T-cell (primary cell): ENCODE measurements at regions of chr1 and their contacts with region 1.

Region 1: DNA sequence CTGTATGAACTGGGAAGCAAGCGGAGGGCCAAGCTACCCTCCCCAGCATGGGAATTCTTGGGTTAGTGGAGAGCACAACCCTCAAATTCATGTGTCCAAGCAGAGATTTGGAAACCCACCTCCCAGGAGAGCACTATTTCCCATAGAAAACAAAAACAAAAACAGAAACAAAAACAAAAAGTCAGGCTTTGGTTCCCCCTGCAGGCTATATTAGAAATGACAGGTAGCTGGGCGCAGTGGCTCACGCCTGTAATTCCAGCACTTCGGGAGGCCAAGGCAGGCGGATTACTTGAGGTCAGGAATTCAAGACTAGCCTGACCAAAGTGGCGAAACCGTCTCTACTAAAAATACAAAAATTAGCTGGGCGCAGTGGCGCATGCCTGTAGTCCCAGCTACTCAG is 10.8 kb downstream of the MINDY1 start:
- DNase-seq: peak in 8 of 35 experiments; percentile 16 to 66 (median 22)
- ATAC-seq: peak in 3 of 4 experiments; percentile 37 to 55 (median 48)
- H3K4me3 ChIP-seq: no peak overlapping the region
- H3K4me3 Mint-ChIP-seq: no peak overlapping the region
- H3K27ac ChIP-seq: peak overlapping the region; percentile 9
- H3K27ac Mint-ChIP-seq: peak overlapping the region; percentile 76 to 79
- H3K4me1 ChIP-seq: peaks cover 0 to 11% of the 10 kb centered on the region in 2 experiments
- H3K4me1 Mint-ChIP-seq: peaks cover 7 to 15% (median 13%) of the 10 kb centered on the region in 3 donors
- H3K27me3 ChIP-seq: peaks cover 0 to 2% of the 10 kb centered on the region in 2 experiments
- H3K27me3 Mint-ChIP-seq: no peaks in the 10 kb centered on the region

Region 2: GRCh38 chr1:150876119-150876454 is 119.8 kb before region 1 on chr1:
- CTCF ChIA-PET with region 1: no interaction called
- POLR2A ChIA-PET with region 1: no interaction called
- DNase-seq: peak in 1 of 35 experiments; percentile 49
- ATAC-seq: peak in 3 of 4 experiments; percentile 46 to 54 (median 49)
- H3K4me3 ChIP-seq: peak overlapping the region; percentile 63 to 78
- H3K4me3 Mint-ChIP-seq: peak overlapping the region; percentile 86 to 90 (median 89)
- H3K27ac ChIP-seq: peak overlapping the region; percentile 71
- H3K27ac Mint-ChIP-seq: peak overlapping the region; percentile 65 to 83
- H3K4me1 ChIP-seq: peaks cover 4 to 13% of the 10 kb centered on the region in 2 experiments
- H3K4me1 Mint-ChIP-seq: peaks cover 28 to 39% (median 35%) of the 10 kb centered on the region in 3 donors
- H3K27me3 ChIP-seq: no peaks in the 10 kb centered on the region
- H3K27me3 Mint-ChIP-seq: no peaks in the 10 kb centered on the region

Region 3: DNA sequence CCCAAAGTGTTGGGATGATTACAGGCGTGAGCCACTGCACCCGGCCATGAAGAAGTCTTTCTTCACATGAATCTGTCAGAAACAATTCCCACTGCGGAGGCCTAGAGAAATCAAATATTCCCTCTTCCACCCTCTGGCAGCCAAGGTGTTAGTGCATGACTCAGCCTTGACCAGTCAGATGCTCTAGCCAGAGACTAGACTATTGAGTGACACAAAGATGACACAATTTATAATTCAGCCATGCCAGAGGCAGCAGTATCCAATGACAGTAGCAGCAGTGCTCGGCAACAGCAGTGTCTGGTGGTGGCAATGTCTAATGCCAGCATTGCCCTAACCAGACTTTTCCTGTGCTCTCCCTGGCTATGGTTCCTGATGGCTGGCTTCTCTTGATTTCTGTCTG is 100.3 kb before region 1 on chr1:
- CTCF ChIA-PET with region 1: no interaction called
- POLR2A ChIA-PET with region 1: no interaction called
- DNase-seq: no peak
- ATAC-seq: no peak
- H3K4me3 ChIP-seq: no peak overlapping the region
- H3K4me3 Mint-ChIP-seq: no peak overlapping the region
- H3K27ac ChIP-seq: no peak overlapping the region
- H3K27ac Mint-ChIP-seq: no peak overlapping the region
- H3K4me1 ChIP-seq: peaks cover 1 to 4% of the 10 kb centered on the region in 2 experiments
- H3K4me1 Mint-ChIP-seq: peaks cover 4 to 12% (median 12%) of the 10 kb centered on the region in 3 donors
- H3K27me3 ChIP-seq: peaks cover 0 to 4% of the 10 kb centered on the region in 2 experiments
- H3K27me3 Mint-ChIP-seq: peaks cover 0 to 4% of the 10 kb centered on the region in 2 donors

Region 4: GRCh38 chr1:150912623-150913022 is 83.3 kb before region 1 on chr1:
- CTCF ChIA-PET with region 1: no interaction called
- POLR2A ChIA-PET with region 1: no interaction called
- DNase-seq: no peak
- ATAC-seq: no peak
- H3K4me3 ChIP-seq: no peak overlapping the region
- H3K4me3 Mint-ChIP-seq: no peak overlapping the region
- H3K27ac ChIP-seq: no peak overlapping the region
- H3K27ac Mint-ChIP-seq: no peak overlapping the region
- H3K4me1 ChIP-seq: no peaks in the 10 kb centered on the region
- H3K4me1 Mint-ChIP-seq: peaks cover 0 to 3% (median 0%) of the 10 kb centered on the region in 3 donors
- H3K27me3 ChIP-seq: no peaks in the 10 kb centered on the region
- H3K27me3 Mint-ChIP-seq: no peaks in the 10 kb centered on the region

Region 5: GRCh38 chr1:151006327-151007052 is 10.6 kb after region 1 on chr1 and contains the start of gene MINDY1:
- CTCF ChIA-PET with region 1: interaction called, 3 to 30 read pairs
- POLR2A ChIA-PET with region 1: no interaction called
- DNase-seq: peak in 7 of 35 experiments; percentile 19 to 55 (median 28)
- ATAC-seq: peak in 2 of 4 experiments; percentile 14 to 17
- H3K4me3 ChIP-seq: peak within 1 kb of the TSS; percentile 80 to 85
- H3K4me3 Mint-ChIP-seq: peak within 1 kb of the TSS; percentile 96 to 98 (median 98)
- H3K27ac ChIP-seq: peak within 1 kb of the TSS; percentile 97
- H3K27ac Mint-ChIP-seq: peak within 1 kb of the TSS; percentile 96 to 99
- H3K4me1 ChIP-seq: peaks cover 46 to 82% of the 10 kb centered on the region in 2 experiments
- H3K4me1 Mint-ChIP-seq: peaks cover 85 to 89% (median 89%) of the 10 kb centered on the region in 3 donors
- H3K27me3 ChIP-seq: no peaks in the 10 kb centered on the region
- H3K27me3 Mint-ChIP-seq: no peaks in the 10 kb centered on the region
- total RNA-seq, gene MINDY1: 15.3 to 26.8 (median 19.0) TPM

Region 6: DNA sequence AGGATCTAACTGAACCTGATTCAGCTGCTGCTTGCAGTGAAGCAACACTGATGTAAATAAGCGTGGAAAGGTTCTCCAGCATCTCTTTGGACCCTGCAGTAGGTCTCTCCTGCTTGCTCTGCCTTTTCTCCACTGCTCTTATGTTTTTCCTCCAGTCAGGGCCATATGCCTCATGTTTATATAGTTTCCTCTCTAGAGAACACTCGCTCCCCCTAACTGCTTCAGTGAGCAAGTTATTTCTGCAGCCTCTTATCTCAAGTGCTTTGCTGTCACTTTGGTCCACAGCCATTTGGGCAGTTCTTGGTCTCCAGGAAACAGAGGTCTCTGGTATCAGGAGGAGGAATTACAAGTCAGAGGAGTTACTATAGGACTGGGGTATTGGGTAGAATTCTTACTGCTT is 17.6 kb after region 1 on chr1:
- CTCF ChIA-PET with region 1: interaction called, 3 to 11 read pairs
- POLR2A ChIA-PET with region 1: no interaction called
- DNase-seq: no peak
- ATAC-seq: no peak
- H3K4me3 ChIP-seq: no peak overlapping the region
- H3K4me3 Mint-ChIP-seq: no peak overlapping the region
- H3K27ac ChIP-seq: no peak overlapping the region
- H3K27ac Mint-ChIP-seq: peak overlapping the region in 1 of 2 donors; percentile 44
- H3K4me1 ChIP-seq: peaks cover 23 to 34% of the 10 kb centered on the region in 2 experiments
- H3K4me1 Mint-ChIP-seq: peaks cover 34 to 44% (median 41%) of the 10 kb centered on the region in 3 donors
- H3K27me3 ChIP-seq: no peaks in the 10 kb centered on the region
- H3K27me3 Mint-ChIP-seq: no peaks in the 10 kb centered on the region

Region 7: DNA sequence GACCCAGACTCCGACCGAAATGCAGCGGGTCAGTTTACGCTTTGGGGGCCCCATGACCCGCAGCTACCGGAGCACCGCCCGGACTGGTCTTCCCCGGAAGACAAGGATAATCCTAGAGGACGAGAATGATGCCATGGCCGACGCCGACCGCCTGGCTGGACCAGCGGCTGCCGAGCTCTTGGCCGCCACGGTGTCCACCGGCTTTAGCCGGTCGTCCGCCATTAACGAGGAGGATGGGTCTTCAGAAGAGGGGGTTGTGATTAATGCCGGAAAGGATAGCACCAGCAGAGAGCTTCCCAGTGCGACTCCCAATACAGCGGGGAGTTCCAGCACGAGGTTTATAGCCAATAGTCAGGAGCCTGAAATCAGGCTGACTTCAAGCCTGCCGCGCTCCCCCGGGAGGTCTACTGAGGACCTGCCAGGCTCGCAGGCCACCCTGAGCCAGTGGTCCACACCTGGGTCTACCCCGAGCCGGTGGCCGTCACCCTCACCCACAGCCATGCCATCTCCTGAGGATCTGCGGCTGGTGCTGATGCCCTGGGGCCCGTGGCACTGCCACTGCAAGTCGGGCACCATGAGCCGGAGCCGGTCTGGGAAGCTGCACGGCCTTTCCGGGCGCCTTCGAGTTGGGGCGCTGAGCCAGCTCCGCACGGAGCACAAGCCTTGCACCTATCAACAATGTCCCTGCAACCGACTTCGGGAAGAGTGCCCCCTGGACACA is 52.2 kb after region 1 on chr1:
- CTCF ChIA-PET with region 1: no interaction called
- POLR2A ChIA-PET with region 1: interaction called in 1 of 2 experiments, 11 read pairs
- DNase-seq: peak in 33 of 35 experiments; percentile 32 to 79 (median 50)
- ATAC-seq: peak; percentile 61 to 79 (median 64)
- H3K4me3 ChIP-seq: peak overlapping the region; percentile 75 to 95
- H3K4me3 Mint-ChIP-seq: peak overlapping the region; percentile 88 to 92 (median 89)
- H3K27ac ChIP-seq: peak overlapping the region; percentile 72
- H3K27ac Mint-ChIP-seq: peak overlapping the region; percentile 96
- H3K4me1 ChIP-seq: peaks cover 20 to 41% of the 10 kb centered on the region in 2 experiments
- H3K4me1 Mint-ChIP-seq: peaks cover 70 to 78% (median 73%) of the 10 kb centered on the region in 3 donors
- H3K27me3 ChIP-seq: no peaks in the 10 kb centered on the region
- H3K27me3 Mint-ChIP-seq: no peaks in the 10 kb centered on the region

Region 8: GRCh38 chr1:151085953-151086559 is 90.2 kb after region 1 on chr1:
- CTCF ChIA-PET with region 1: no interaction called
- POLR2A ChIA-PET with region 1: no interaction called
- DNase-seq: no peak
- ATAC-seq: no peak
- H3K4me3 ChIP-seq: no peak overlapping the region
- H3K4me3 Mint-ChIP-seq: no peak overlapping the region
- H3K27ac ChIP-seq: no peak overlapping the region
- H3K27ac Mint-ChIP-seq: no peak overlapping the region
- H3K4me1 ChIP-seq: no peaks in the 10 kb centered on the region
- H3K4me1 Mint-ChIP-seq: no peaks in the 10 kb centered on the region
- H3K27me3 ChIP-seq: no peaks in the 10 kb centered on the region
- H3K27me3 Mint-ChIP-seq: no peaks in the 10 kb centered on the region